Motor neuron (in vitro differentiated cells): ENCODE measurements at regions of chr9 and their contacts with region 1.

Region 1: GRCh38 chr9:1709345-1709744 is 305.8 kb upstream of the SMARCA2 start:
- ATAC-seq: no peak
- H3K4me3 ChIP-seq: no peak overlapping the region
- H3K27ac ChIP-seq: no peak overlapping the region
- H3K4me1 ChIP-seq: no peaks in the 10 kb centered on the region

Region 2: DNA sequence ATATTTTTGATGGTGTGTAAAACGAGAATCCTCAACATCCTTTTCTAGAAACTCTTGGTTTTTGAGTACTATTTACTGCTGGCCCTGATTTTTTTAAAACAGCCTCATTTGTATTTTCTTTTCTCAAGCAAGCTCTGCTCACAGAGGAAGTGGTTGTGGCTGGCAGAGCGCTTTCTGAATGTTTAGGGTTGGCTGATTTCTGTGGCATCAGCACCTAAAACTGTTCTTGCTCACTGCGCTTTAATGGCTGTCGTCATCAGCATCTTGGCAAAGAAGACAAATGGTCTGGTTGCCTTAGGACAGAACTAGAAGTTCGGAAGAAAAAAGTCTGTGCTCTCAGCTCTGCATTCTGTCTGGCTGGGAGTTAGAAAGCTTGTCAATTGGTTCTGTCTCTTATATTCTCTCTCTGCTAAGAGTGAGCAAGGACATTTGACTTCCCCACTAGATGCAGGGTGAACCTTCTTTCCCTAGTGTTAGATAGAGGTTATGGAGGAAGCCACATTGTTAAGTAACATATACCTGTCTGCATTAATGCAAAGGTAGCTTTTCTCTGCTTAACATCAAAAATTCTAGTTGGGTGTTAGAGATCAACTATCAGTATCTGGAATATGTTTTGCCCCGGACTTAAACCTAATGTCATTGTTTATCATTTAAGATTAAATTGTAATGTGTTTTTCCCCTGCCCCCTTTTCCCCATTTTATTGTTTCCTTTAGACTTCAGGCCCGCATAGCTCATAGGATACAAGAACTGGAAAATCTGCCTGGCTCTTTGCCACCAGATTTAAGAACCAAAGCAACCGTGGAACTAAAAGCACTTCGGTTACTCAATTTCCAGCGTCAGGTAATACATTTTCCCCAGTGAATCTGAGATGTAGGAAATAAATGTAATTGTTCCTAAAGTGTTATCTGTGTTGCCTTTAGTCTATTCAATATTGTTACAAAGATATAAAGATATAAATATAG is 344.8 kb after region 1 on chr9:
- in situ Hi-C with region 1: loop called in 1 of 9 experiments (anchors 25 kb)
- ATAC-seq: peak in 1 of 8 experiments; percentile 8
- H3K4me3 ChIP-seq: no peak overlapping the region
- H3K27ac ChIP-seq: no peak overlapping the region
- H3K4me1 ChIP-seq: peaks cover 0 to 5% of the 10 kb centered on the region in 2 donors